PC-3 (cell line): ENCODE measurements at regions of chr1 and their contacts with region 1.

Region 1: GRCh38 chr1:239558991-239559390 is 172.6 kb downstream of the CHRM3 start:
- DNase-seq: peak; percentile 69
- ATAC-seq: peak; percentile 72
- H3K4me3 ChIP-seq: peak overlapping the region; percentile 41
- H3K27ac ChIP-seq: peak overlapping the region; percentile 79
- H3K4me1 ChIP-seq: peaks cover 22% of the 10 kb centered on the region
- H3K27me3 ChIP-seq: no peaks in the 10 kb centered on the region
- CTCF ChIP-seq: no peak

Region 2: GRCh38 chr1:239448911-239449310 is 110.1 kb before region 1 on chr1:
- CTCF ChIA-PET with region 1: no interaction called
- POLR2A ChIA-PET with region 1: no interaction called
- intact Hi-C with region 1: loop called (anchors 5 kb)
- DNase-seq: no peak
- ATAC-seq: peak; percentile 12; the same call in 1 of the 2 replicates
- H3K4me3 ChIP-seq: no peak overlapping the region
- H3K27ac ChIP-seq: no peak overlapping the region
- H3K4me1 ChIP-seq: peaks cover 28% of the 10 kb centered on the region
- H3K27me3 ChIP-seq: no peaks in the 10 kb centered on the region
- CTCF ChIP-seq: no peak

Region 3: GRCh38 chr1:239647964-239648632 is 89.1 kb after region 1 on chr1:
- CTCF ChIA-PET with region 1: no interaction called
- POLR2A ChIA-PET with region 1: interaction called, 20 read pairs
- intact Hi-C with region 1: no loop called
- DNase-seq: no peak
- ATAC-seq: no peak
- H3K4me3 ChIP-seq: no peak overlapping the region
- H3K27ac ChIP-seq: no peak overlapping the region
- H3K4me1 ChIP-seq: no peaks in the 10 kb centered on the region
- H3K27me3 ChIP-seq: no peaks in the 10 kb centered on the region
- CTCF ChIP-seq: no peak

Region 4: DNA sequence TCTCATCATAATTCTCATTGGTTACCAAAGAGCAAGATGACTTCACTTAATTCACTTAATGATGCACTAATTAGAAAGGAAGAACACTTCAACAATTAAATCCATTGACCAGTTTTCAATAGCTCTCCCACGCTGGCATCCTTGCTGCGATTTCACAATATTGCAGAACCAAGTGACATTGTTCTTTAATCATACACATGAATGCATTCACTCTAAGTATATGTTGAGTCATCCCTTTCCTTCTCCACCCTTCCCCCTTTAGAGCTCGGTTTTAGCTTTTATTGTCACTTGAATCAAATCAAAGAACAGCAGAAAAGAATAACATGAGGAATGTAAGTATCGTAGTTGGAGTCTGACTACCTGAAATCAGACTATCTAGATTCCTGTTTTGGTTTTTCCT is 299.1 kb after region 1 on chr1:
- CTCF ChIA-PET with region 1: no interaction called
- POLR2A ChIA-PET with region 1: interaction called, 4 read pairs
- intact Hi-C with region 1: loop called (anchors 5 kb)
- DNase-seq: peak; percentile 93
- ATAC-seq: peak; percentile 97
- H3K4me3 ChIP-seq: peak overlapping the region; percentile 53
- H3K27ac ChIP-seq: peak overlapping the region; percentile 57
- H3K4me1 ChIP-seq: peaks cover 18% of the 10 kb centered on the region
- H3K27me3 ChIP-seq: no peaks in the 10 kb centered on the region
- CTCF ChIP-seq: no peak